Activated CD4-positive, alpha-beta T cell treated with anti-CD3 and anti-CD28 coated beads, Interleukin-2, amount 10 ng/mL, durations not matched to agents 7 days and 5 days (primary cell): ENCODE measurements at regions of chr20 and their contacts with region 1.

Region 1: GRCh38 chr20:50484276-50484976 is 25.8 kb upstream of the PTPN1 start:
- DNase-seq: no peak
- H3K4me3 Mint-ChIP-seq: peak overlapping the region; percentile 83
- H3K27ac Mint-ChIP-seq: peak overlapping the region; percentile 93
- H3K4me1 Mint-ChIP-seq: peaks cover 46% of the 10 kb centered on the region
- H3K27me3 Mint-ChIP-seq: no peaks in the 10 kb centered on the region

Region 2: GRCh38 chr20:50226093-50226974 is 258.1 kb before region 1 on chr20:
- CTCF ChIA-PET with region 1: no interaction called
- POLR2A ChIA-PET with region 1: no interaction called
- DNase-seq: no peak
- H3K4me3 Mint-ChIP-seq: no peak overlapping the region
- H3K27ac Mint-ChIP-seq: no peak overlapping the region
- H3K4me1 Mint-ChIP-seq: peaks cover 12% of the 10 kb centered on the region
- H3K27me3 Mint-ChIP-seq: no peaks in the 10 kb centered on the region

Region 3: GRCh38 chr20:50292324-50293243 is 191.8 kb before region 1 on chr20:
- CTCF ChIA-PET with region 1: no interaction called
- POLR2A ChIA-PET with region 1: no interaction called
- DNase-seq: peak; percentile 18
- H3K4me3 Mint-ChIP-seq: no peak overlapping the region
- H3K27ac Mint-ChIP-seq: no peak overlapping the region
- H3K4me1 Mint-ChIP-seq: peaks cover 30% of the 10 kb centered on the region
- H3K27me3 Mint-ChIP-seq: no peaks in the 10 kb centered on the region

Region 4: DNA sequence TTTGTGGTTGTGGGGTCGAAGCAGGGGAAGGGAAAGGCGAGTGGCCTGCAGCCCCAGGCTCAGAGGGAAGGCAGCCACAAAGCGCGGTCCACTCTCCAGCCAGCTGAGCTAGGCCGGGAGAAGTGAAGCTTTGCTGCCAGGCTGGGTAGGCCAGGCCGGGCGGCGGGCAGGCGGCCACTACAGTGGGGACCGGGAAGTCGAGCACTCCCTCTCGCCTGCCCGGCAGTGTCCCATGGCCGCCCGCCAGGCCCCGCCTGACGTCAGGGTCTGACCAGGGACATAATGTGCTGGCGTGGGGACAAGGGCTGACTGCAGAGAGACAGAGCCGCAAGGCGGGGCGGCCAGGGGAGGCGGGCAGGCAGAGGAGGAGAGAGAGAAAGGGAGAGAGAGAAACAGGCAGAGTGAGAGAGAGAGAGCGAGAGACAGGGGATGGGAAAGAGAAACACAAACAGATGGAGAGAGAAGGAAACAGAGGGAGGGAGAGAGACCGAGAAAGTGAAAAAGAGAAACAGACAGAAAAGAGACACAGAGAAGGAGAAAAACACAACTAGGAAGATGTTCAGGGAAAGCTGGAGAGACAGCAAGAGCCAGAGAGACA is 68.8 kb before region 1 on chr20:
- CTCF ChIA-PET with region 1: no interaction called
- POLR2A ChIA-PET with region 1: no interaction called
- DNase-seq: no peak
- H3K4me3 Mint-ChIP-seq: no peak overlapping the region
- H3K27ac Mint-ChIP-seq: no peak overlapping the region
- H3K4me1 Mint-ChIP-seq: no peaks in the 10 kb centered on the region
- H3K27me3 Mint-ChIP-seq: peaks cover 17% of the 10 kb centered on the region

Region 5: GRCh38 chr20:50471204-50471610 is 13.2 kb before region 1 on chr20:
- CTCF ChIA-PET with region 1: interaction called, 11 read pairs
- POLR2A ChIA-PET with region 1: no interaction called
- DNase-seq: no peak
- H3K4me3 Mint-ChIP-seq: no peak overlapping the region
- H3K27ac Mint-ChIP-seq: no peak overlapping the region
- H3K4me1 Mint-ChIP-seq: peaks cover 33% of the 10 kb centered on the region
- H3K27me3 Mint-ChIP-seq: no peaks in the 10 kb centered on the region

Region 6: DNA sequence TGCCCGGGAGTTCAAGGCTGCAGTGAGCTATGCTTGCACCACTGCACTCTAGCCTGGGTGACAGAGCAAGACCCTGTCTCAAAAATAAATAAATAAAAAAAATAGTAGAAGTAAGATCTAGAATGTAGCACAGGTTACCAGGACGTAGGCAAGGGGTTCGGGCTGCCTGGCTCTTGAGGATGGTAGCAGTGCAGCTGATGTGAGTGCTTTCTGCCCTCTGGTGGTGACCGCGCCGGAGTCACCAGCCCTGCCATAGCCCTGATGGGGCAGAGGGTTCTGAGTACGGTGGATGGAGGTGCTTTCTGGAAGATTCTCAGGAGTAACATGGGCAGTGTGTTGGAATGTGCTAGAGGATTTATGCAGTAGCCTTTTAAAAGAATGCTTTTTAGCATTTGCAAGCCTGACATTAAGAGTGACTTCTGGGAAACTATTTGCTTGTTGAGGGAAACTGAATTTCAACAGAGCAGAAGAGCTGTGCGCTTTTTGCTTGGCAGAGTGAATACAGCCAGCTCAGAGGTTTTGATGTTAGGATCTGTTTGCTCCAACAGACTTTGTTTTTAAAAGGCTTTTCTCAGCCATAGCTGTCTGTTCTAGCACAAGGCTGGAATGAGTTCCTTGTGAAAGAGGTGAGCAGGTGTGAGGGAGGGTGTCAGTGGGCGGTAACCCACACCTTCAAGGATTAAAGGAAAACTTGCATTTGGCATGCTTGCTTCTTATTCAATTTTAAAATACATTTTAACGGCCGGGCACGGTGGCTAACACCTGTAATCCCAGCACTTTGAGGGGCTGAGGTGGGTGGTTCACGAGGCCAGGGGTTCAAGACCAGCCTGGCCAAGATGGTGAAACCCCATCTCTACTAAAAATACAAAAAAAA is 91.7 kb after region 1 on chr20:
- CTCF ChIA-PET with region 1: interaction called, 12 read pairs
- POLR2A ChIA-PET with region 1: no interaction called
- DNase-seq: peak; percentile 73
- H3K4me3 Mint-ChIP-seq: no peak overlapping the region
- H3K27ac Mint-ChIP-seq: peak overlapping the region; percentile 31
- H3K4me1 Mint-ChIP-seq: peaks cover 39% of the 10 kb centered on the region
- H3K27me3 Mint-ChIP-seq: no peaks in the 10 kb centered on the region